ENCODE measurements at regions of chr2 and their contacts with region 1.

Region 1: GRCh38 chr2:197174539-197175094 is 136.0 kb downstream of the ANKRD44 start:
- DNase-seq: peak; percentile 86
- ATAC-seq: peak; percentile 99
- H3K4me3 ChIP-seq: no peak overlapping the region
- H3K27ac ChIP-seq: no peak overlapping the region
- H3K4me1 ChIP-seq: peaks cover 25% of the 10 kb centered on the region
- H3K27me3 ChIP-seq: no peaks in the 10 kb centered on the region
- CTCF ChIP-seq: no peak

Region 2: DNA sequence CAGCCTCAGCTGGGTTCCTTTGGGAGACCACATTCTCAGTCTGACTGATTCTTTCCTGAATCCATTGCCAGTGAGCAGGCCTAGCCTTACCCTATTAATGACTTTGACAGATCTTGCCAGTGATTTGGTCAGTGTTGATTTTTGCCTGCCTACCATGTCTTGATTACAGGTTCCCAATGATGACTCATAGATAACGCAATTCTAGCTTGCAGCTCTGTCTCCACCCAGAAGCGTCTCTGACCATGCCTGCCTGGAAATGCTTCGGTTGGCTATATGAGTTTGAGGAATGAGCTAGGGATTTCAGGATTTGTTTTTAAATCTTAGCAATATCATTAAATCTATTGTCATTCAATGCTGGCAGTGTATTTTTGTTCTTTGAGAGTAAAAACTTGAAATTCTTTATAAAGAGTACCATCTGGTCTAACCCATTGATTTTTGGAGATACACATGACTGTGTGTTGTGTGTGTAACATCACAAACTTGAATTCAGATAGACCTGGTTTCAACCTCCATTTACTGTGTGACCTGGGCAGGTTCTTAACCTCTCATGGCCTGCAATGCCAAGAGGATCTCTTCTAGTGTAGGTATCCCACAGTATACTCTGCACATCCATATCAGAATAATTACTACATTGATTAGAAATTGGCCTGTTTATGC is 478.1 kb before region 1 on chr2:
- CTCF ChIA-PET with region 1: no interaction called
- POLR2A ChIA-PET with region 1: no interaction called
- intact Hi-C with region 1: no loop called
- DNase-seq: peak; percentile 38
- ATAC-seq: peak; percentile 42; the same call in 1 of the 2 replicates
- H3K4me3 ChIP-seq: no peak overlapping the region
- H3K27ac ChIP-seq: no peak overlapping the region
- H3K4me1 ChIP-seq: 0 out of 2 replicates have a peak, but pooled peaks cover 4% of the 10 kb centered on the region
- H3K27me3 ChIP-seq: no peaks in the 10 kb centered on the region
- CTCF ChIP-seq: no peak

Region 3: GRCh38 chr2:197073701-197074433 is 100.8 kb before region 1 on chr2:
- CTCF ChIA-PET with region 1: no interaction called
- POLR2A ChIA-PET with region 1: no interaction called
- intact Hi-C with region 1: loop called (anchors 5 kb)
- DNase-seq: no peak
- ATAC-seq: no peak
- H3K4me3 ChIP-seq: no peak overlapping the region
- H3K27ac ChIP-seq: no peak overlapping the region
- H3K4me1 ChIP-seq: peaks cover 10% of the 10 kb centered on the region; the same call in 1 of the 2 replicates
- H3K27me3 ChIP-seq: no peaks in the 10 kb centered on the region
- CTCF ChIP-seq: no peak

Region 4: GRCh38 chr2:197085665-197086064 is 89.0 kb before region 1 on chr2:
- CTCF ChIA-PET with region 1: no interaction called
- POLR2A ChIA-PET with region 1: no interaction called
- intact Hi-C with region 1: no loop called
- DNase-seq: no peak
- ATAC-seq: no peak
- H3K4me3 ChIP-seq: no peak overlapping the region
- H3K27ac ChIP-seq: no peak overlapping the region
- H3K4me1 ChIP-seq: peaks cover 1% of the 10 kb centered on the region
- H3K27me3 ChIP-seq: no peaks in the 10 kb centered on the region
- CTCF ChIP-seq: no peak

Region 5: GRCh38 chr2:197159661-197160211 is 14.9 kb before region 1 on chr2:
- CTCF ChIA-PET with region 1: no interaction called
- POLR2A ChIA-PET with region 1: interaction called, 9 read pairs
- intact Hi-C with region 1: loop called (anchors 1 kb)
- DNase-seq: peak; percentile 92
- ATAC-seq: peak; percentile 89
- H3K4me3 ChIP-seq: peak overlapping the region; percentile 51
- H3K27ac ChIP-seq: peak overlapping the region; percentile 93
- H3K4me1 ChIP-seq: peaks cover 36% of the 10 kb centered on the region
- H3K27me3 ChIP-seq: no peaks in the 10 kb centered on the region
- CTCF ChIP-seq: no peak

Region 6: GRCh38 chr2:197310271-197310985 is 135.8 kb after region 1 on chr2 and contains the start of gene ANKRD44:
- CTCF ChIA-PET with region 1: no interaction called
- POLR2A ChIA-PET with region 1: no interaction called
- intact Hi-C with region 1: no loop called
- DNase-seq: peak; percentile 80
- ATAC-seq: peak; percentile 88
- H3K4me3 ChIP-seq: peak within 1 kb of the TSS; percentile 78
- H3K27ac ChIP-seq: no peak within 1 kb of the TSS
- H3K4me1 ChIP-seq: peaks cover 32% of the 10 kb centered on the region
- H3K27me3 ChIP-seq: no peaks in the 10 kb centered on the region
- CTCF ChIP-seq: 0 out of 2 replicates have a peak, but pooled peaks have one; percentile 7
- total RNA-seq, gene ANKRD44: 2.4 and 28.7 TPM in 2 replicates